B cell (primary cell): ENCODE measurements at regions of chr10 and their contacts with region 1.

Region 1: GRCh38 chr10:48656241-48656913 is 28.3 kb upstream of the WDFY4 start:
- DNase-seq: peak; percentile 96
- ATAC-seq: peak; percentile 94
- H3K4me3 ChIP-seq: peak overlapping the region; percentile 33 to 59 (median 53)
- H3K4me3 Mint-ChIP-seq: peak overlapping the region; percentile 86
- H3K27ac ChIP-seq: no peak overlapping the region
- H3K27ac Mint-ChIP-seq: peak overlapping the region; percentile 72
- H3K4me1 ChIP-seq: peaks cover 45 to 47% of the 10 kb centered on the region in 2 donors
- H3K4me1 Mint-ChIP-seq: peaks cover 52% of the 10 kb centered on the region
- H3K27me3 ChIP-seq: peaks cover 0 to 16% (median 8%) of the 10 kb centered on the region in 4 experiments
- H3K27me3 Mint-ChIP-seq: peaks cover 4% of the 10 kb centered on the region
- CTCF ChIP-seq: peak; percentile 99

Region 2: GRCh38 chr10:48363617-48364355 is 292.6 kb before region 1 on chr10:
- CTCF ChIA-PET with region 1: interaction called, 86 read pairs
- POLR2A ChIA-PET with region 1: no interaction called
- intact Hi-C with region 1: loop called (anchors 1 kb)
- DNase-seq: peak; percentile 59
- ATAC-seq: no peak
- H3K4me3 ChIP-seq: no peak overlapping the region
- H3K4me3 Mint-ChIP-seq: no peak overlapping the region
- H3K27ac ChIP-seq: no peak overlapping the region
- H3K27ac Mint-ChIP-seq: no peak overlapping the region
- H3K4me1 ChIP-seq: no peaks in the 10 kb centered on the region
- H3K4me1 Mint-ChIP-seq: peaks cover 5% of the 10 kb centered on the region
- H3K27me3 ChIP-seq: no peaks in the 10 kb centered on the region
- H3K27me3 Mint-ChIP-seq: no peaks in the 10 kb centered on the region
- CTCF ChIP-seq: peak; percentile 71

Region 3: GRCh38 chr10:48608279-48608681 is 48.1 kb before region 1 on chr10:
- CTCF ChIA-PET with region 1: interaction called, 407 read pairs
- POLR2A ChIA-PET with region 1: interaction called, 3 read pairs
- intact Hi-C with region 1: loop called (anchors 1 kb)
- DNase-seq: peak; percentile 74
- ATAC-seq: peak; percentile 85
- H3K4me3 ChIP-seq: no peak overlapping the region
- H3K4me3 Mint-ChIP-seq: no peak overlapping the region
- H3K27ac ChIP-seq: no peak overlapping the region
- H3K27ac Mint-ChIP-seq: no peak overlapping the region
- H3K4me1 ChIP-seq: peaks cover 23 to 27% of the 10 kb centered on the region in 2 donors
- H3K4me1 Mint-ChIP-seq: peaks cover 30% of the 10 kb centered on the region
- H3K27me3 ChIP-seq: peaks cover 0 to 16% (median 4%) of the 10 kb centered on the region in 4 experiments
- H3K27me3 Mint-ChIP-seq: peaks cover 13% of the 10 kb centered on the region
- CTCF ChIP-seq: peak; percentile 83

Region 4: DNA sequence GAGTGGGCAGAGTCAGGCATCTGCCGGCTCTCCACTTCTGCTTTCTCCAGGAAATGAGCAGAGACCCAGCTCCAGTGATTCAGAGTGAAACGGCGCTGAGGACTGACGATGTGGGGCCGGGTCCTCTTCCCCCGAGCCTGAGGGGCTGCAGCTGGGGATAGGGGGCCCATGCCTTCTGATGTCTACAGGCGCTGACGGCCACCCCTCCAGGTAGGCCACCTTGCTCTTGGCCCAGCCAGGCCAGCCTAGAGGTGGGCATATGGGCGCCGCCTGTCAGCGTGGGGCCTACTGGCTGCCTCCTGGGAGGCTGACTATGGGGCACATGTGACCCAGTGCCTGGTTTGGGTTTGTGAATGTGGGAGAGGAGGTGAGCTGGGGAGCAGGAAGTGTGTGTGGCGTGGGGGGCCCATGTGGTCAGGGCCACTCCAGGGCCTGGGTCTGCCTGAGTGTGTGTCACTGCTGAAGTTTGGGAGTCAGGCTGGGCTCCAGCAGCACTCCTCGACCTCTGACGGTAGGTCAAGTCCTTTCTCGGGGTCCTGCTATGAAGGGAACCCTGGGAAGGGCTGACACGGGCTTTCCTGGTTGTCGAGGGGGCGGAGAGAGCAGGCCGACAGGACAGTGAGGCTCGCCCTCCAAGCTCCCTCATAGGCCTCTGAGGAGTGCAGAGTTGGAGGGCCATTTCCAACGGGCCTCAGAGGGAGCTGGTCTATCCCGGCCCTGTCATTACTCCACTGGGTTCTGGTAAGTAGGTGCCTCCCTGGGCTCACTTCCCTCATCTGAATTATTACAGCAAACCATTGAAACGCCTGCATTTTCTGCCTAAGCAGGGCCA is 28.6 kb after region 1 on chr10 and contains the start of gene WDFY4:
- CTCF ChIA-PET with region 1: interaction called, 139 read pairs
- POLR2A ChIA-PET with region 1: interaction called, 5 read pairs
- intact Hi-C with region 1: loop called (anchors 1 kb)
- DNase-seq: peak; percentile 85
- ATAC-seq: peak; percentile 74
- H3K4me3 ChIP-seq: peak within 1 kb of the TSS; percentile 73 to 89 (median 86)
- H3K4me3 Mint-ChIP-seq: peak within 1 kb of the TSS; percentile 94
- H3K27ac ChIP-seq: peak within 1 kb of the TSS; percentile 99
- H3K27ac Mint-ChIP-seq: peak within 1 kb of the TSS; percentile 97
- H3K4me1 ChIP-seq: peaks cover 64 to 77% of the 10 kb centered on the region in 2 donors
- H3K4me1 Mint-ChIP-seq: peaks cover 66% of the 10 kb centered on the region
- H3K27me3 ChIP-seq: no peaks in the 10 kb centered on the region
- H3K27me3 Mint-ChIP-seq: no peaks in the 10 kb centered on the region
- CTCF ChIP-seq: no peak
- total RNA-seq, gene WDFY4: 560 and 570 TPM in 2 replicates

Region 5: GRCh38 chr10:48736596-48736995 is 80.2 kb after region 1 on chr10:
- CTCF ChIA-PET with region 1: interaction called, 42 read pairs
- POLR2A ChIA-PET with region 1: no interaction called
- intact Hi-C with region 1: no loop called
- DNase-seq: no peak
- ATAC-seq: no peak
- H3K4me3 ChIP-seq: no peak overlapping the region
- H3K4me3 Mint-ChIP-seq: no peak overlapping the region
- H3K27ac ChIP-seq: peak overlapping the region in 1 of 2 donors; percentile 52
- H3K27ac Mint-ChIP-seq: peak overlapping the region; percentile 59
- H3K4me1 ChIP-seq: no peaks in the 10 kb centered on the region
- H3K4me1 Mint-ChIP-seq: no peaks in the 10 kb centered on the region
- H3K27me3 ChIP-seq: no peaks in the 10 kb centered on the region
- H3K27me3 Mint-ChIP-seq: no peaks in the 10 kb centered on the region
- CTCF ChIP-seq: no peak

Region 6: DNA sequence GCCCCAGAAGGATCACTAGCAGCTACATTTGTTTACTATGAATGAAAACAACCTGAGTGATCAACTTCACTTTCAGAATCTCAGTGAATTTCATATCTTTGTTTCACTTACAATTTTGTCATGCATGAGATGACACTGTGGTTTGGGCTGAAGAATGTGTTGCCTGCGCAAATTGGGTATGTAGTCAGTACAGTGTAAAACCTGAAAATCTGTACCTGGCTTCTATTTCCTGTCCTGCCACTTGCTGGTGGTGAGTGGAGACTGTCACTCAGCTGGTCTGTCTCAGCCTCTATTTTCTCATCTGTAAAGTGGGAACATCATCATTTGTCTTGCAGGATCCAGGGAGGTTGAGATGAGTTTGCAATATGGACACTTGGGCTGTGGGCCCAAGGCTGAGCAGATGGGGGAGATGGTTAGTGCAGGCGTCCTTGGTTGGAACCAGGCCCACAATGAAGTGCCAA is 146.3 kb after region 1 on chr10:
- CTCF ChIA-PET with region 1: interaction called, 100 read pairs
- POLR2A ChIA-PET with region 1: interaction called, 4 read pairs
- intact Hi-C with region 1: loop called (anchors 2 kb)
- DNase-seq: peak; percentile 80
- ATAC-seq: peak; percentile 79
- H3K4me3 ChIP-seq: no peak overlapping the region
- H3K4me3 Mint-ChIP-seq: peak overlapping the region; percentile 81
- H3K27ac ChIP-seq: peak overlapping the region; percentile 45 to 95
- H3K27ac Mint-ChIP-seq: peak overlapping the region; percentile 97
- H3K4me1 ChIP-seq: peaks cover 56 to 63% of the 10 kb centered on the region in 2 donors
- H3K4me1 Mint-ChIP-seq: peaks cover 80% of the 10 kb centered on the region
- H3K27me3 ChIP-seq: no peaks in the 10 kb centered on the region
- H3K27me3 Mint-ChIP-seq: no peaks in the 10 kb centered on the region
- CTCF ChIP-seq: no peak

Region 7: GRCh38 chr10:49009199-49009979 is 353.0 kb after region 1 on chr10:
- CTCF ChIA-PET with region 1: no interaction called
- POLR2A ChIA-PET with region 1: no interaction called
- intact Hi-C with region 1: no loop called
- DNase-seq: no peak
- ATAC-seq: no peak
- H3K4me3 ChIP-seq: no peak overlapping the region
- H3K4me3 Mint-ChIP-seq: no peak overlapping the region
- H3K27ac ChIP-seq: no peak overlapping the region
- H3K27ac Mint-ChIP-seq: no peak overlapping the region
- H3K4me1 ChIP-seq: no peaks in the 10 kb centered on the region
- H3K4me1 Mint-ChIP-seq: no peaks in the 10 kb centered on the region
- H3K27me3 ChIP-seq: no peaks in the 10 kb centered on the region
- H3K27me3 Mint-ChIP-seq: peaks cover 3% of the 10 kb centered on the region
- CTCF ChIP-seq: no peak